ENCODE measurements at regions of chr7 and their contacts with region 1.

Region 1: DNA sequence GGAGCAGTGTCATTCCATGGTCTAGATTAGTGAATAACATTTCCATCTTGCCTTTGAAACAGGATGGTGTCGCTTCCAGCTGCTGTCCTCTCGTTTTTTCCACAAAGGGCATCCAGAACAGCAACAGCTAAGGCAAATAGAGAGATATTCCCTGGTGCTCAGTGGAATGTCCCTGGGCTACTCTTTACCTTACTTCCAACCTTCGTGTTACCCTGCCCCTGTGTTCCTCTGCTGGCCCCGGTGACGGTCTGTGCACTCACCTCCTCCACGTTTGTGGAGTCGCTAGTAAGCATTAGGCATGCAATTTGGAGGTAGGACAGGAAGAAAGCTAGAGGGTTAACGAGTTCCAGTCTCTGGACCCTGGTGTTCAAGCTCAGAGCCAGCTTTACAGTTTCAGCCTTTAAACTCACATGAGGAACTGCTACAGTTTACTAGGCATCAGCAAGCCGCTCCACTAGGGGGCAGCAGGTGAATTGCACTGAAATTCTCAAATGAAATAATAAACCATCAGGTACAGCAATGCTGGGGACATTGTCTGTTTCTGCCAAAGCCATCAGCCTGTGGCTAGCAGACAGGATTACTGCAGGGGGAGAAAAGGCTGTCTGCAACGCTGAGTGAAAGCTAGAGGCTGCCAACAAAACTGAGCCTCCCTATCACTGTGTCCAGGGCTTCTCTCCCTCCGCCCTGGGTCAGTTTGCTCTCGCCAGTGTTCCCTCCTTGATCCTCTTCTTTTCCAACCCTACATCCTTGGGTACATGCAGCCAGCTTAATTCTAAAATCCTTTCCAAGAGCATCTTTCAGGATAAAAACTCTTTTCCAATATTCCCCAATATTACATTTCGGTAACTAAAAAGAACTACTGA is 9.0 kb downstream of the MRPL32 start:
- DNase-seq: peak; percentile 82
- H3K4me3 Mint-ChIP-seq: no peak overlapping the region
- H3K27ac Mint-ChIP-seq: no peak overlapping the region
- H3K4me1 Mint-ChIP-seq: peaks cover 24% of the 10 kb centered on the region
- H3K27me3 Mint-ChIP-seq: no peaks in the 10 kb centered on the region

Region 2: GRCh38 chr7:42843205-42843800 is 97.9 kb before region 1 on chr7:
- CTCF ChIA-PET with region 1: no interaction called
- POLR2A ChIA-PET with region 1: no interaction called
- DNase-seq: no peak
- H3K4me3 Mint-ChIP-seq: no peak overlapping the region
- H3K27ac Mint-ChIP-seq: no peak overlapping the region
- H3K4me1 Mint-ChIP-seq: no peaks in the 10 kb centered on the region
- H3K27me3 Mint-ChIP-seq: peaks cover 20% of the 10 kb centered on the region

Region 3: GRCh38 chr7:43260980-43261878 is 320.0 kb after region 1 on chr7:
- CTCF ChIA-PET with region 1: interaction called, 11 read pairs
- POLR2A ChIA-PET with region 1: no interaction called
- DNase-seq: peak; percentile 68
- H3K4me3 Mint-ChIP-seq: no peak overlapping the region
- H3K27ac Mint-ChIP-seq: no peak overlapping the region
- H3K4me1 Mint-ChIP-seq: no peaks in the 10 kb centered on the region
- H3K27me3 Mint-ChIP-seq: peaks cover 14% of the 10 kb centered on the region